Caco-2 (cell line): ENCODE measurements at regions of chr17 and their contacts with region 1.

Region 1: GRCh38 chr17:60720763-60721531 is 43.3 kb downstream of the BCAS3 start:
- DNase-seq: peak; percentile 45 to 67
- H3K4me3 ChIP-seq: no peak overlapping the region
- H3K4me3 Mint-ChIP-seq: no peak overlapping the region
- H3K27ac Mint-ChIP-seq: no peak overlapping the region
- H3K4me1 ChIP-seq: no peaks in the 10 kb centered on the region
- H3K4me1 Mint-ChIP-seq: peaks cover 7% of the 10 kb centered on the region
- H3K27me3 ChIP-seq: no peaks in the 10 kb centered on the region
- H3K27me3 Mint-ChIP-seq: no peaks in the 10 kb centered on the region
- CTCF ChIP-seq: peak; percentile 87 to 90

Region 2: GRCh38 chr17:60887615-60888028 is 166.7 kb after region 1 on chr17:
- CTCF ChIA-PET with region 1: no interaction called
- POLR2A ChIA-PET with region 1: no interaction called
- intact Hi-C with region 1: no loop called
- DNase-seq: no peak
- H3K4me3 ChIP-seq: peak overlapping the region; percentile 46
- H3K4me3 Mint-ChIP-seq: peak overlapping the region; percentile 97
- H3K27ac Mint-ChIP-seq: peak overlapping the region; percentile 99
- H3K4me1 ChIP-seq: peaks cover 6% of the 10 kb centered on the region; the same call in 1 of the 2 replicates
- H3K4me1 Mint-ChIP-seq: peaks cover 10% of the 10 kb centered on the region
- H3K27me3 ChIP-seq: no peaks in the 10 kb centered on the region
- H3K27me3 Mint-ChIP-seq: no peaks in the 10 kb centered on the region
- CTCF ChIP-seq: no peak

Region 3: GRCh38 chr17:60971515-60972369 is 250.8 kb after region 1 on chr17:
- CTCF ChIA-PET with region 1: interaction called, 19 read pairs
- POLR2A ChIA-PET with region 1: no interaction called
- intact Hi-C with region 1: loop called (anchors 5 kb)
- DNase-seq: peak; percentile 58 to 62
- H3K4me3 ChIP-seq: no peak overlapping the region
- H3K4me3 Mint-ChIP-seq: no peak overlapping the region
- H3K27ac Mint-ChIP-seq: no peak overlapping the region
- H3K4me1 ChIP-seq: no peaks in the 10 kb centered on the region
- H3K4me1 Mint-ChIP-seq: no peaks in the 10 kb centered on the region
- H3K27me3 ChIP-seq: no peaks in the 10 kb centered on the region
- H3K27me3 Mint-ChIP-seq: no peaks in the 10 kb centered on the region
- CTCF ChIP-seq: peak; percentile 66 to 77